ENCODE measurements at regions of chr13 and their contacts with region 1.

Region 1: DNA sequence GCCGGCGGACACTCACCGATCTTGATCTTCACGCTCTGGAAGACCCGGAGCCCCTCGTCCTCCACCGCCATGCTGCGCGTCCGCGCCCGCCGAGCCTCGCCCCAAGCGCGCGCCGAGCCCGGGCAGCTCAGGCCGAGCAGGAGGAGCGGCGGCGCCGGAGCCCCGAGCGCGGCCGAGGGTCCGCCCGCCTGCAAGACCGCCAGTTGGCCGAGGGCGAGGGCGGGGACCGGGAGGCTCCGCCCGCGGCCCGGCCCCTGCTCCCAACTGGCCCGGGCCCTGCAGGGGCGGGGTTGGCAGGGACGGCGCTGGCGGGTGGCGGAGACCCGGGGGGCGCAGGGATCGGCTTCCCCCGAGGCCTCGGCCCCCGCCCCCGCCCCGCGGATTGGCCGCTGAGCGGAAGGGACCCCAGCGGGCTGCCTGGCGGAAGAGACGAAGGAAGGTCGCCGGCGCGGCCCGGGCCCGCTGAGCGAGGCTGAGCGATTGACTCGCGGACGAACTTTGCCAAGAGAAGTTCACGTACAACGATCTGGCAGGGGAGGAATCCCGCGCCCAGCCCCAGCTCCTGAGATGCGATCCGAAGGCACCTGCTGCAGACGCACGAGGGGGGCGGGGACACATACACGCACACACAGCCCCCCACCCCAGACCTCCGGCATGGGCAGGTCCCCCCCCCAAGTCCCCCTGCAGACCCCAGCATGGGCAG is at the start of gene RASA3:
- DNase-seq: peak; percentile 76
- ATAC-seq: peak; percentile 32
- H3K4me3 Mint-ChIP-seq: peak within 1 kb of the TSS; percentile 98
- H3K27ac Mint-ChIP-seq: peak within 1 kb of the TSS; percentile 83
- H3K4me1 Mint-ChIP-seq: peaks cover 43% of the 10 kb centered on the region
- H3K27me3 Mint-ChIP-seq: peaks cover 13% of the 10 kb centered on the region
- total RNA-seq, gene RASA3: 65.6 to 73.9 TPM

Region 2: GRCh38 chr13:113785051-113786010 is 347.2 kb before region 1 on chr13:
- POLR2A ChIA-PET with region 1: no interaction called
- DNase-seq: no peak
- ATAC-seq: no peak
- H3K4me3 Mint-ChIP-seq: no peak overlapping the region
- H3K27ac Mint-ChIP-seq: no peak overlapping the region
- H3K4me1 Mint-ChIP-seq: no peaks in the 10 kb centered on the region
- H3K27me3 Mint-ChIP-seq: peaks cover 11% of the 10 kb centered on the region

Region 3: GRCh38 chr13:114143806-114144605 is 11.4 kb after region 1 on chr13:
- POLR2A ChIA-PET with region 1: interaction called, 38 read pairs
- DNase-seq: peak; percentile 50
- ATAC-seq: peak; percentile 19
- H3K4me3 Mint-ChIP-seq: no peak overlapping the region
- H3K27ac Mint-ChIP-seq: peak overlapping the region; percentile 35
- H3K4me1 Mint-ChIP-seq: peaks cover 35% of the 10 kb centered on the region
- H3K27me3 Mint-ChIP-seq: peaks cover 10% of the 10 kb centered on the region

Measured in activated naive CD8-positive, alpha-beta T cell treated with anti-CD3 and anti-CD28 coated beads, Interleukin-2, amount 10 ng/mL, durations not matched to agents 7 days and 5 days (primary cell).